Activated CD4-positive, alpha-beta T cell treated with anti-CD3 and anti-CD28 coated beads for 36 hours (primary cell): ENCODE measurements at regions of chr19 and their contacts with region 1.

Region 1: DNA sequence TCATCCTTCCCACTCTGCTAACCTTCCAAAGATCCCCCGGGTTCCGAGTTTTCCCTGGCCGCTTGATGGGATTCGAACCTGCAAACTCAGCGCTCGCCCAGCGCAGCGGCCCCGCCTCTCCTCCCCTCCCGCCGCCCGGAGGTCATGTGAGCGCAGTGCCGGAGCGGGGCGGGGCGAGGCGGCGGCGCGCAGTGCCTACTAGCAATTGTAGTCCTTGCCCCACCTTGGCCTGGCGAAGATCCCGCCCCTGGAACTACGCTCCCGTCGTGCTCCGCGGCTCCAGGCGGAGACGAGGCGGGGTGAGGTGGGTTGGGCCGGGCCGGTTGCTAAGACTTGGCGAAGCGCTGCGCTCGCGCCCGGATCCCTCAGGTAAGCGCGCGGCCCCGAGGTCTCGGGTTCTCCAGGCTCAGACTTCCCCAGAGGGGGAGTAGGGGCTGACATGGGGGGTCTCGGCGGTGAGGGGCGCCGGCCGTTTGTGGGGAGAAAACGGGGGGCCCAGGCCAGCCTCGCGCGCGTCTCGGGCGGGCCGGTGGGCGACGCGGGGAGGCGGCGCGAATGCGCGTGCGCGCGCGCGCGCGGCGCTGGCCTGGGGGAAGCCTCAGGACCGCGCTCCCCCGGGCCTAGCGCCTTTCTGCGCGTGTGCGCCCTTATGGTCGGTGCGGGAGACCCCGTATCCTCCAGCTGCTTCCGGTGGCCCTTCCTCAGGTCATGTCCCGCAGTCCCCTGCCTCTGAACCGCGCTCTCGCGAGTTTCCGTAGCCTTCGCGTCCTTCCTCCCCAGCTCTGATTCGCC is at the starts of genes ADAT3 and SCAMP4:
- DNase-seq: peak; percentile 100
- ATAC-seq: peak; percentile 98
- H3K4me3 Mint-ChIP-seq: peak within 1 kb of the TSS; percentile 84
- H3K27ac Mint-ChIP-seq: peak within 1 kb of the TSS; percentile 82
- H3K4me1 Mint-ChIP-seq: peaks cover 45% of the 10 kb centered on the region
- H3K27me3 Mint-ChIP-seq: no peaks in the 10 kb centered on the region
- total RNA-seq, gene ADAT3: 5.6 to 6.1 TPM
- total RNA-seq, gene SCAMP4: 20.5 to 25.6 TPM

Region 2: DNA sequence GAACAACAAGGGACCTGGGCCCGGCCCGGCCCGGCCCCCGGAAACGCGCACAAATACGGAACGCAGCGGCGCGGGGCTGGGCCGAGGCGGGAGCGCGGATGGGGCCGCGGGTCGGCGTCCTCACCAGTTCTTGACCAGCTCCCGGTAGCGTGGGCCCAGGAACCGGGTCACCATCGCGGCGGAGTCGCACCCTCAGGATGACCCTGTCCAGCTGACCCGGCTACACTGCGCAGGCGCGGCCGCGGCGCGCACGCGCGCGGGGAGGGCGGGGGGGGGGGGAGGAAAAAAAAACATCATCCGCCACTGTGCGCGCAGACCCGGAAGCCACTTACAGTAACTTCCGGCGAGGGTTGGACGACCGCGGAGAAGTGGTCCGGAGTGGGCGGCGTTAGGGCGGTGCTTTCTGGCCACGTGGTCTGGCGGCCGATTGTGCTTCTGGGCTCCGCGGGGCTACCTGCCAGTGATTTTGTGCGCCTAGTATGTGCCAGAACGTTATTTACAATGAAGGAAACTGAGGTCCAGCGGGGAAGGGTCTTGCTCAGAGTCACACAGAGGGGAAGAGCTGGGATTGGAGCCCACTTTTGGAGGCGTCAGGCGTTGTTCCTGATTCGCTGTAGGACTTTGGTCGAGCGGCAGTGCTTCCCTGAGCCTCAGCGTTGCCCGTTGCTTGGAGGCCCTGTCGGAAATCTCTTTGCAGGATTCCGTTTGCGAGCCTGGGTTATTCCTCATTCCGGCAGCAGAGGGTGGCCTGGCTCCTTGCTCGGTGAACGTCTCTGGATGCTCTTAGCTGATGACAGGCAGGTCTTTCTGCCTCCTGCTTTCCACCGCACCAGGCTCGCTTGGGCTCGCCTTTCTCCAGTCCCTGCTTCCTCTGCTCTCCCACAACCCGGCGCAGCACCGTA is 299.8 kb before region 1 on chr19 and contains the start of gene UQCR11:
- CTCF ChIA-PET with region 1: no interaction called
- POLR2A ChIA-PET with region 1: no interaction called
- intact Hi-C with region 1: loop called in 1 of 2 experiments (anchors 1 kb)
- DNase-seq: peak; percentile 96
- ATAC-seq: peak; percentile 89
- H3K4me3 Mint-ChIP-seq: peak within 1 kb of the TSS; percentile 97
- H3K27ac Mint-ChIP-seq: peak within 1 kb of the TSS; percentile 99
- H3K4me1 Mint-ChIP-seq: peaks cover 52% of the 10 kb centered on the region
- H3K27me3 Mint-ChIP-seq: no peaks in the 10 kb centered on the region
- total RNA-seq, gene UQCR11: 152 to 226 TPM

Region 3: DNA sequence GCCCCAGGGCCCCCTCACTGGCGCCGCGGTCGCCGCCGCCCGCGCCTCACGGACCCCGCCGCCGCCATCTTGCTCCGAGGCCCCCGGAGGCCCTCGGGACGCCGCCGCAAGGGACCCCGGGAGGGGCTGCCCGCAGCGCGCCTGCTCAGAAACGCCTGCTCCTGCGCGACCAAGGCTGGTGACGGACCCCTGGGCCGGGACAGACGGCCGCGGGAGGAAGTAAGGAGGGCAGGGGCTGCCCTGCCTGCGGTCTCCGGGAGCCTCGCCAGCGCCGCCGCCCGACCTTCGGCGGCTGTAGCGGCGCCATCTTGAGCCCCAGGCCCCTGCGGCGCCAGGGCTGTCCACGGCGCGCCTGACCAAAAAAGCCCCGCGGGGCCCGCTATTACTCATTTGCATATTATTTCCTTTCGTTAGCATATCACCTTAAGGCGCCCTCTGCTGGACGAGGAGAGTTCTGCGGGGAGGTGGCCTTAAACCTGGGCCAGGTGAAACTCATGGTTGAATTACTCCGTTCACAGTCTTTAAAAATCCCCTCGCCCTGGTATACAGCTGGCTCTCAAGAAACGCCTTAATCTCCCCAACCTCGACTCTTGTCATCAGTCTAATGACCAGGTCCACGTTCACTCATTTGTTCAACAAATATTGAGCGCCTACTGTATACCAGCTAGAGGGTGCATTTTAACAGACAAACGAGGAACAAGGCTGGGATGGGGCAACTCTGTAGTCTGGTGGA is 56.7 kb before region 1 on chr19 and contains the start of gene REXO1:
- CTCF ChIA-PET with region 1: no interaction called
- POLR2A ChIA-PET with region 1: no interaction called
- intact Hi-C with region 1: loop called in 1 of 2 experiments (anchors 1 kb)
- DNase-seq: peak; percentile 98
- ATAC-seq: peak; percentile 72
- H3K4me3 Mint-ChIP-seq: peak within 1 kb of the TSS; percentile 92
- H3K27ac Mint-ChIP-seq: peak within 1 kb of the TSS; percentile 88
- H3K4me1 Mint-ChIP-seq: peaks cover 65% of the 10 kb centered on the region
- H3K27me3 Mint-ChIP-seq: no peaks in the 10 kb centered on the region
- total RNA-seq, gene REXO1: 39.3 to 49.8 TPM

Region 4: GRCh38 chr19:1875646-1876495 is 29.4 kb before region 1 on chr19:
- CTCF ChIA-PET with region 1: interaction called, 4 read pairs
- POLR2A ChIA-PET with region 1: interaction called, 4 read pairs
- intact Hi-C with region 1: loop called in 1 of 2 experiments (anchors 1 kb)
- DNase-seq: peak; percentile 95
- ATAC-seq: peak; percentile 96
- H3K4me3 Mint-ChIP-seq: peak overlapping the region; percentile 92
- H3K27ac Mint-ChIP-seq: peak overlapping the region; percentile 97
- H3K4me1 Mint-ChIP-seq: peaks cover 20% of the 10 kb centered on the region
- H3K27me3 Mint-ChIP-seq: no peaks in the 10 kb centered on the region

Region 5: DNA sequence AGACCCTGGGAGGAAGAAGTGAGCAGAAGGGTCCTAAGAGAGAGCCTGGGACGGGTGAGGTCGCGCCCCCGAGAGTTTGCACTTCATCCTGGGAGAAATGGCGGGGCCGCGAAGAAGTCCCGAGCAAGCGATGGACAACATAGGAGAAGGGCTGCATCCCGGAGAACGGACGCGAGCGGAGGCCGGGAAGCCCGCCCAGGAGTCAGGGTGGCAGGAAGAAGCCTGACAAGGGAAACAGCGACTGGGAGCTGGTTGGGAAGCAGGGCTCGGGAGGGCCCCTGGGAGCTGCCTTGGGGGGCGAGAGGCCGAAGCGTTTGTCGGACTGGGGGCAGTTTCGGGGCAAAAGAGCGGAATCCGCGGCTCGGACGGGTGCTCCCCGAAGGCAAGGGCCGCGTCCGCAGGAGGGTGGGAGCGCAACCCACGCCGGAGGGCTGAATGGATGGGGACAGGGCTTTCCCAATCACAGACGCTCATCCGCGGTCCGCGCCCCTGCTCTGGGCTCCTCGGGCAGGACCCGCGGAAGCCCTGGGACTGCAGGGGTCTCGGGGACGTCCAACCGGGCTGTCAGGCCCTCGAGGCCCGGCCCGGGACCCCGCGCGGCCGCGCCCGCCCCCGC is 20.4 kb before region 1 on chr19:
- CTCF ChIA-PET with region 1: interaction called, 3 read pairs
- POLR2A ChIA-PET with region 1: no interaction called
- intact Hi-C with region 1: loop called (anchors 1 kb)
- DNase-seq: peak; percentile 32
- ATAC-seq: peak; percentile 1
- H3K4me3 Mint-ChIP-seq: peak overlapping the region; percentile 97
- H3K27ac Mint-ChIP-seq: peak overlapping the region; percentile 98
- H3K4me1 Mint-ChIP-seq: peaks cover 31% of the 10 kb centered on the region
- H3K27me3 Mint-ChIP-seq: no peaks in the 10 kb centered on the region

Region 6: GRCh38 chr19:1929021-1929742 is 23.9 kb after region 1 on chr19:
- CTCF ChIA-PET with region 1: interaction called, 6 read pairs
- POLR2A ChIA-PET with region 1: interaction called, 11 read pairs
- intact Hi-C with region 1: no loop called
- DNase-seq: peak; percentile 90
- ATAC-seq: peak; percentile 87
- H3K4me3 Mint-ChIP-seq: peak overlapping the region; percentile 45
- H3K27ac Mint-ChIP-seq: no peak overlapping the region
- H3K4me1 Mint-ChIP-seq: peaks cover 24% of the 10 kb centered on the region
- H3K27me3 Mint-ChIP-seq: peaks cover 2% of the 10 kb centered on the region

Region 7: GRCh38 chr19:2027361-2027760 is 122.1 kb after region 1 on chr19:
- CTCF ChIA-PET with region 1: no interaction called
- POLR2A ChIA-PET with region 1: no interaction called
- intact Hi-C with region 1: no loop called
- DNase-seq: no peak
- ATAC-seq: no peak
- H3K4me3 Mint-ChIP-seq: no peak overlapping the region
- H3K27ac Mint-ChIP-seq: no peak overlapping the region
- H3K4me1 Mint-ChIP-seq: peaks cover 7% of the 10 kb centered on the region
- H3K27me3 Mint-ChIP-seq: no peaks in the 10 kb centered on the region

Region 8: GRCh38 chr19:2041683-2042484 is 136.6 kb after region 1 on chr19:
- CTCF ChIA-PET with region 1: no interaction called
- POLR2A ChIA-PET with region 1: no interaction called
- intact Hi-C with region 1: loop called in 1 of 2 experiments (anchors 1 kb)
- DNase-seq: peak; percentile 100
- ATAC-seq: peak; percentile 88
- H3K4me3 Mint-ChIP-seq: peak overlapping the region; percentile 73
- H3K27ac Mint-ChIP-seq: peak overlapping the region; percentile 88
- H3K4me1 Mint-ChIP-seq: peaks cover 17% of the 10 kb centered on the region
- H3K27me3 Mint-ChIP-seq: no peaks in the 10 kb centered on the region